ENCODE measurements at regions of chr1 and their contacts with region 1.

Region 1: GRCh38 chr1:192698731-192699130 is 62.8 kb downstream of the RGS13 start:
- DNase-seq: no peak
- ATAC-seq: no peak
- H3K4me3 ChIP-seq: no peak overlapping the region
- H3K27ac ChIP-seq: no peak overlapping the region
- H3K4me1 ChIP-seq: peaks cover 10 to 17% (median 17%) of the 10 kb centered on the region in 3 donors
- H3K27me3 ChIP-seq: no peaks in the 10 kb centered on the region
- CTCF ChIP-seq: no peak

Region 2: DNA sequence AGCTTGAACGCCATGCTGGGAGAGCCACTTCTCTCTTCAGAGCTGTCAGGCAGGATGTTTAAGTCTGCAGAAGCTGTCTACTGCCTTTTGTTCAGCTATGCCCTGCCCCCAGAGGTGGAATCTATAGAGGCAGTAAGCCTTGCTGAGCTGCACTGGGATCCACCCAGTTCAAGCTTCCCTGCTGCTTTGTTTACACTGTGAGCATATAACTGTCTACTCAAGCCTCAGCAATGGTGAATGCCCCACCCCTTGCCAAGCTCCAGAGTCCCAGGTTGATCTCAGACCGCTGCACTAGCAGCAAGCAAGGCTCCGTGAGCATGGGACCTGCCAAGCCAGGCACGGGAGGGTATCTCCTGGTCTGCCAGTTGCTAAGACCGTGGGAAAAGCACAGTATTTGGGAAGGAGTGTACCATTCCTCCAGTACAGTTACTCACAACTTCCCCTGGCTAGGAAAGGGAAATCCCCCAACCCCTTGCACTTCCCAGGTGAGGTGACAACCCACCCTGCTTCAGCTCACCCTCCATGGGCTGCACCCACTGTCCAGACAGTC is 30.2 kb before region 1 on chr1:
- intact Hi-C with region 1: no loop called
- DNase-seq: no peak
- ATAC-seq: no peak
- H3K4me3 ChIP-seq: no peak overlapping the region
- H3K27ac ChIP-seq: no peak overlapping the region
- H3K4me1 ChIP-seq: no peaks in the 10 kb centered on the region
- H3K27me3 ChIP-seq: no peaks in the 10 kb centered on the region
- CTCF ChIP-seq: no peak

Region 3: DNA sequence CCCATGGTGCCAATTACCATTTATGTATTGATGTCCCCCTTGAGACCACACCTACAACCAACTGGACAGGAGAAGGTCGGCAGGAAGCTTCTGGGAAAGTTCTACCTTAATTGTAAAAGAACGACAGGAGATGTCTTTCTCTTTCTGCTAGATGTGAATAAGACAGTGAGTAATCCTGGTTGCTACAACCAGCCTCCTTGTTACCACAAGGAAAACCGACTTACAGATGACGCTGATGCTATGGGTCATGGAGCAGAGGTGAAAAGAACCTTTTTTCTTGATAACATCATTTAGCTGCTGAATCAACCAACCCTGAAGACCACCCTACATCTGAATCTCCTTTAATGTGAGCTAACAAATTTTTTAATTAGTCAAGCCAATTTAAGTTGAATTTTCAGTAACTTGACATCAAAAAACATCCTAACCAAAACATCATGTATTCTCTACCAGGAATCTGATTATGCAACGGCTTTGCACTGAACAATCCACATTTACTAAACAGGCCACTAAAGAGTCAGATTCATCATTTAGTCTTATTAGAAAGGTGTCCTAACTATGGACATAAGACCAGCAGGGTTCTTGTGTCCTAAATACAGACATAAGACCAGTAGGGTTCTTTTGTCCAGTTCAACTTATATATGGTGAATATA is 133.1 kb after region 1 on chr1:
- intact Hi-C with region 1: no loop called
- DNase-seq: no peak
- ATAC-seq: no peak
- H3K4me3 ChIP-seq: no peak overlapping the region
- H3K27ac ChIP-seq: no peak overlapping the region
- H3K4me1 ChIP-seq: peaks cover 0 to 9% (median 0%) of the 10 kb centered on the region in 3 donors
- H3K27me3 ChIP-seq: no peaks in the 10 kb centered on the region
- CTCF ChIP-seq: no peak

Region 4: DNA sequence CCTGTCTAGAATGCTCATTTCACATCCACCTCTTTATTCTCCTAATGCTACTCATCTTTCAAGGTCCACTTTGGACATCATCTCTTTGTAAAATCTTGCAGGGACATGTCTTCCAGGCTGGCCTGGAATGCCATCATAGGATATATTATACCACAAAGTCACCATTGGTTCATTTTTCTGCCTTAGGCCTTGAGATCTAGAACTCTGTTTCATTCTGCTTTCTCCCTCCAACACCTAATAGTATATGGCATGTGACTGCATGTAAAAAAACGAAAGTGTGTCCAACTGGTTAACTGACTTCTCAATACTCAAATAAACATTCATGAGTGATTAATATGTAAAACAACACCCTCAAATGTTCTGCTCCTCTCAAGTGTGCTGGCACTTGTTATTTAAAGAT is 194.2 kb after region 1 on chr1:
- intact Hi-C with region 1: loop called in 1 of 3 experiments (anchors 10 kb)
- DNase-seq: no peak
- ATAC-seq: no peak
- H3K4me3 ChIP-seq: no peak overlapping the region
- H3K27ac ChIP-seq: no peak overlapping the region
- H3K4me1 ChIP-seq: no peaks in the 10 kb centered on the region
- H3K27me3 ChIP-seq: no peaks in the 10 kb centered on the region
- CTCF ChIP-seq: no peak